ENCODE measurements at regions of chr3 and their contacts with region 1.

Region 1: GRCh38 chr3:129934234-129935123 is 40.0 kb upstream of the TRH start:
- ATAC-seq: peak in 7 of 8 experiments; percentile 32 to 70 (median 47)
- H3K4me3 ChIP-seq: no peak overlapping the region
- H3K27ac ChIP-seq: no peak overlapping the region
- H3K4me1 ChIP-seq: peaks cover 3 to 7% of the 10 kb centered on the region in 2 donors

Region 2: GRCh38 chr3:129633751-129634392 is 300.6 kb before region 1 on chr3:
- in situ Hi-C with region 1: loop called in 6 of 9 experiments (anchors 10 to 25 kb)
- ATAC-seq: peak in 1 of 8 experiments; percentile 36
- H3K4me3 ChIP-seq: no peak overlapping the region
- H3K27ac ChIP-seq: no peak overlapping the region
- H3K4me1 ChIP-seq: no peaks in the 10 kb centered on the region